PC-3 (cell line): ENCODE measurements at regions of chr10 and their contacts with region 1.

Region 1: DNA sequence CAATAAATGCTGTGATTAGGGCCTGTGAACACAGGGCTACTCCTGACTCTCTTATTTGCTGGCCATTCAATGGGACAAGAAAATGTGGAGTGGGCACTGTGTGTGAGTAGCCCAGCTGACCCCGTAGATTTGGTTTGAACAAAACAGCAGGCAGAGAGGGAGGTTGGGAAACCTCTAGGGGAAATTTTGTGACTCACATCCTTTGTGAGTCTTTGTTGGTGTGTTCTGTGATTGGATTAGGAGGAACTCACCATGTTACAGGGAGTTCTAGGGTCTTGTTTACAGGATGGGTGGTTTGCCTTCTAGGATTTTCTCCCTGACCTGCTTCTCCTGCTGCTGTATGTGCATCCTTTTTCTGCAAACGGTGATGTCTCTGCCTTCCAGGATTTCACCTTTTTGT is 128.3 kb upstream of the MKI67 start:
- DNase-seq: no peak
- ATAC-seq: no peak
- H3K4me3 ChIP-seq: no peak overlapping the region
- H3K27ac ChIP-seq: no peak overlapping the region
- H3K4me1 ChIP-seq: no peaks in the 10 kb centered on the region
- H3K27me3 ChIP-seq: peaks cover 28% of the 10 kb centered on the region
- CTCF ChIP-seq: no peak

Region 2: GRCh38 chr10:127940866-127941640 is 313.4 kb before region 1 on chr10:
- CTCF ChIA-PET with region 1: no interaction called
- POLR2A ChIA-PET with region 1: interaction called, 16 read pairs
- intact Hi-C with region 1: no loop called
- DNase-seq: no peak
- ATAC-seq: no peak
- H3K4me3 ChIP-seq: no peak overlapping the region
- H3K27ac ChIP-seq: no peak overlapping the region
- H3K4me1 ChIP-seq: peaks cover 15% of the 10 kb centered on the region
- H3K27me3 ChIP-seq: no peaks in the 10 kb centered on the region
- CTCF ChIP-seq: no peak